A673 (cell line): ENCODE measurements at regions of chr5 and their contacts with region 1.

Region 1: GRCh38 chr5:37575541-37576489 is 196.7 kb downstream of the WDR70 start:
- DNase-seq: peak; percentile 95
- H3K4me3 ChIP-seq: no peak overlapping the region
- H3K27ac ChIP-seq: peak overlapping the region; percentile 98
- H3K4me1 ChIP-seq: peaks cover 86% of the 10 kb centered on the region
- H3K27me3 ChIP-seq: no peaks in the 10 kb centered on the region
- CTCF ChIP-seq: no peak

Region 2: GRCh38 chr5:37412515-37413277 is 163.1 kb before region 1 on chr5:
- CTCF ChIA-PET with region 1: interaction called, 4 read pairs
- POLR2A ChIA-PET with region 1: no interaction called
- intact Hi-C with region 1: loop called (anchors 1 kb)
- DNase-seq: peak; percentile 91
- H3K4me3 ChIP-seq: no peak overlapping the region
- H3K27ac ChIP-seq: no peak overlapping the region
- H3K4me1 ChIP-seq: peaks cover 6% of the 10 kb centered on the region
- H3K27me3 ChIP-seq: no peaks in the 10 kb centered on the region
- CTCF ChIP-seq: peak; percentile 98

Region 3: GRCh38 chr5:37554938-37555337 is 20.9 kb before region 1 on chr5:
- CTCF ChIA-PET with region 1: no interaction called
- POLR2A ChIA-PET with region 1: interaction called, 8 read pairs
- intact Hi-C with region 1: loop called (anchors 2 kb)
- DNase-seq: no peak
- H3K4me3 ChIP-seq: no peak overlapping the region
- H3K27ac ChIP-seq: peak overlapping the region; percentile 95
- H3K4me1 ChIP-seq: peaks cover 26% of the 10 kb centered on the region
- H3K27me3 ChIP-seq: no peaks in the 10 kb centered on the region
- CTCF ChIP-seq: peak; percentile 48

Region 4: GRCh38 chr5:37837414-37838032 is 261.7 kb after region 1 on chr5:
- CTCF ChIA-PET with region 1: no interaction called
- POLR2A ChIA-PET with region 1: no interaction called
- intact Hi-C with region 1: loop called (anchors 5 kb)
- DNase-seq: peak; percentile 93
- H3K4me3 ChIP-seq: peak overlapping the region; percentile 59
- H3K27ac ChIP-seq: peak overlapping the region; percentile 84
- H3K4me1 ChIP-seq: peaks cover 46% of the 10 kb centered on the region
- H3K27me3 ChIP-seq: no peaks in the 10 kb centered on the region
- CTCF ChIP-seq: peak; percentile 88

Region 5: DNA sequence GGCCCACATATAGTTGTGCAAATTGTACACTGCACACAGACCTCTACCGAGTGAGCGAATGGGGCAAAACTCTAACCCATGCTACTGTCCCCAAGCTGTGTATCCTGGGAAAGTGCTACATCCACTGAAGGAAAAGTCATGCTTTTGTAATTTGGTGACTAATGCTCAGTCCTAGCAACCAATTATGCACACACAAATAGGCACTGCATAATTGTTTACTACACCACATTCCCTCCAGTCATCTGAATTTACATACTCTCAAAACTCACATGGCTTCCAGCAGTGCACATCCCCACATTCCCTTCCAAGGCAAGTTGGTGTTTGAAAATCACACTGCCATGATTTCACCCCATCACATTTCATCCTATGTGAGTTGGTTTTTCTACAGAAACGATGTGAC is 1144.1 kb after region 1 on chr5:
- CTCF ChIA-PET with region 1: no interaction called
- POLR2A ChIA-PET with region 1: no interaction called
- intact Hi-C with region 1: loop called (anchors 5 kb)
- DNase-seq: peak; percentile 90
- H3K4me3 ChIP-seq: peak overlapping the region; percentile 11
- H3K27ac ChIP-seq: peak overlapping the region; percentile 90
- H3K4me1 ChIP-seq: peaks cover 87% of the 10 kb centered on the region
- H3K27me3 ChIP-seq: no peaks in the 10 kb centered on the region
- CTCF ChIP-seq: no peak